Common myeloid progenitor, CD34-positive (primary cell): ENCODE measurements at regions of chr14 and their contacts with region 1.

Region 1: DNA sequence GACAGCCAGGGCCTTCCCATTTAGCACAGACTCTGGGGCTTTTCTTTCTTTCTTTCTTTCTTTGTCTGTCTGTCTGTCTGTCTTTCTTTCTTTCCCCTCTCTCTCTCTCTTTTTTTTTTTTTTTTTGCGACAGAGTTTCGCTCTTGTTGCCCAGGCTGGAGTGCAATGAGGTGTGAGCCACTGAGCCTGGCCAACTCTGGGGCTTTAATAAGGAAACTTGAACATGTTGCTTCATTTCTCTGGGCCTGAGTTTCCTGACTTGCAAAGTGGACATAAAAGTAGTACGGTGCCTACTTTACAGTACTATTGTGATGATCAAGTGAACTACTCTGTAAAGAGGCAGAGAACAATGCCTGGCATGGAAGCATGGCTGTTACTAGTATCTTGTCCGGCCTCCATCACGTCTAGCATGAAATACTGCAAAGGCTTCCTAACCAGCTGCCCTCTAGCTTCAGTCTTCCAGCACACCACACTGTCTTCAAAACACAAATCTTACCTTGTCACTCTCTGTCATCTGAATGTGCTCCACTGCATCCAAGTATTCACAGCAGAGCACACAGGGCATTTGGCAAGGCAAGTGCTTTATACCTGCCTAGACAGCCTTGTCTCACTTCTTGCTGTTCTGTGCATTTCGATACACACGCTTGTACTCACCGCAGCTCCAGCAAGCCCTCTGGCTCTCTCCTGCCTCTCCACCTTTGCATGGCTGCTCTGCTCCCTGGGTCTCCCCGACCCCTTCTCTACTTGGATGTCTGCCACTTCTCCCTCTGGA is 96.7 kb downstream of the IRF2BPL start:
- DNase-seq: no peak
- H3K4me3 ChIP-seq: no peak overlapping the region
- H3K27ac ChIP-seq: no peak overlapping the region
- H3K4me1 ChIP-seq: peaks cover 12 to 53% (median 33%) of the 10 kb centered on the region in 4 experiments
- H3K27me3 ChIP-seq: no peaks in the 10 kb centered on the region

Region 2: DNA sequence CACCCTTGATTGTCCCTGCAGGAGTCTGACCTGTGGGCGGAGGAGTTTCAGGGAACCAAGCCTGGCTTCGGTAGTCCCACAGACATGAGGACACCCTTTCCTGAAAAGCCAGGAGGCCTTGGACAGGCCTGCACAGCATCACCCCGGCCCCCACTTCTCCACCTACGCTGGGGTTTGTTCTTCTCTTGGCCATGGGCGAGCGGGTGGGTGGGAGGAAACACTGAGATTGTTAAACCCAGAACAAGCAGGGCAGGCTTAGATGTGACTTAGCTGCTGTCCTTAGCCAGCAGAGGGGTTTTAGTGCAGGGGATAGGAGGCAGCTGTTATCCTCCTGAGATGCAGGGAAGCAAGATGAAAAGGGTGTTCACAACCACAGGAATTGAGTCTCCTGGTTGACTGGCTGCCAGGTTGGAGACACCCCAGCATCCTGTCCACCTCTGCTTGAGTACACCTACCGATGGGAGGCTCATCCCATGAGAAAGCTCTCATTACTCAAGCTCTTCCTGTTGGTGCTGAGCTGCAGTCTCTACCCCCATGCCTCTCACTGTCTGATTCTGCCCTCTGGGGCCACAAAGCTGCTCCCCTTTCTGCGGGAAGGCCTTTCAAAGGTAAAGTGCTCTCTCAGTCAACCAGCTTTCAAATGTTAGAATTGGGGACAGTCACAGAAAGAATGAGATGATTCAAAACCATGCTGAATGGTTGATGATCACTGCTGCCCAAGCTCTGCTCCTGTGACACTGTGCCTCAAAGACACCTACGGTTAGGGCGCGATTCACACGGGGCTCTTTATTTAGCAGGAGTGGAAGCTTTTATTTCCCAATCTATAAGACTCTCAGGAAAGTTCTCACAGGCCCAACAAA is 10.4 kb after region 1 on chr14:
- CTCF ChIA-PET with region 1: interaction called, 21 read pairs
- POLR2A ChIA-PET with region 1: interaction called, 3 read pairs
- DNase-seq: no peak
- H3K4me3 ChIP-seq: no peak overlapping the region
- H3K27ac ChIP-seq: no peak overlapping the region
- H3K4me1 ChIP-seq: peaks cover 0 to 13% (median 8%) of the 10 kb centered on the region in 4 experiments
- H3K27me3 ChIP-seq: no peaks in the 10 kb centered on the region

Region 3: GRCh38 chr14:77043177-77043983 is 111.6 kb after region 1 on chr14:
- CTCF ChIA-PET with region 1: no interaction called
- POLR2A ChIA-PET with region 1: no interaction called
- DNase-seq: peak in 2 of 3 donors; percentile 78 to 83
- H3K4me3 ChIP-seq: peak overlapping the region in 5 of 7 experiments; percentile 20 to 57 (median 33)
- H3K27ac ChIP-seq: peak overlapping the region; percentile 18 to 95
- H3K4me1 ChIP-seq: peaks cover 37 to 97% (median 77%) of the 10 kb centered on the region in 4 experiments
- H3K27me3 ChIP-seq: no peaks in the 10 kb centered on the region